ENCODE measurements at regions of chr2 and their contacts with region 1.

Region 1: GRCh38 chr2:29841386-29842004 is 79.9 kb downstream of the ALK start:
- DNase-seq: peak in 1 of 2 experiments; percentile 48
- H3K4me3 ChIP-seq: no peak overlapping the region
- H3K4me3 Mint-ChIP-seq: no peak overlapping the region
- H3K27ac Mint-ChIP-seq: no peak overlapping the region
- H3K4me1 ChIP-seq: no peaks in the 10 kb centered on the region
- H3K4me1 Mint-ChIP-seq: no peaks in the 10 kb centered on the region
- H3K27me3 ChIP-seq: no peaks in the 10 kb centered on the region
- H3K27me3 Mint-ChIP-seq: peaks cover 21% of the 10 kb centered on the region
- CTCF ChIP-seq: peak; percentile 91 to 92

Region 2: DNA sequence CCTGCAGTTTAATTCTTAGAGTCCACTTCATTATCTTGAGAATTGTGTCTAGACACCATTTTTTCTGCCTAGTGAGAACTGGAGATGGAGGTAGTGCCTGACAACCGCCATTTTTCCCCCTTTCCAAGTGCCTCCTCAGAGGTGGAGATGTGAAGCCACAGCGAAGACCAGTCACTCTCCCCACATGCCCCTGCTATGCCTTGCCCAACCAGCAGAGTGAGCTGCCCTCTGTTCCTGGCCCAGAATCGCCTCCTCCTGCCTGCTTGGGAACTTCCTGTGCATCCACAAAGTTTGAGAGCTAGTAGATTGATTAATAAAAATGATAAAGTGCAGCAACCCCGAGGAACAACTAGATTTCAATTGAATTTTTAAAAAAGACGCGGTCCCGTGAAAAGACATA is 603.0 kb before region 1 on chr2:
- CTCF ChIA-PET with region 1: no interaction called
- POLR2A ChIA-PET with region 1: no interaction called
- intact Hi-C with region 1: loop called (anchors 1 kb)
- DNase-seq: peak in 1 of 2 experiments; percentile 53
- H3K4me3 ChIP-seq: no peak overlapping the region
- H3K4me3 Mint-ChIP-seq: no peak overlapping the region
- H3K27ac Mint-ChIP-seq: no peak overlapping the region
- H3K4me1 ChIP-seq: no peaks in the 10 kb centered on the region
- H3K4me1 Mint-ChIP-seq: peaks cover 5% of the 10 kb centered on the region
- H3K27me3 ChIP-seq: no peaks in the 10 kb centered on the region; the same call in none of the 2 replicates
- H3K27me3 Mint-ChIP-seq: peaks cover 30% of the 10 kb centered on the region
- CTCF ChIP-seq: peak; percentile 43 to 77

Region 3: DNA sequence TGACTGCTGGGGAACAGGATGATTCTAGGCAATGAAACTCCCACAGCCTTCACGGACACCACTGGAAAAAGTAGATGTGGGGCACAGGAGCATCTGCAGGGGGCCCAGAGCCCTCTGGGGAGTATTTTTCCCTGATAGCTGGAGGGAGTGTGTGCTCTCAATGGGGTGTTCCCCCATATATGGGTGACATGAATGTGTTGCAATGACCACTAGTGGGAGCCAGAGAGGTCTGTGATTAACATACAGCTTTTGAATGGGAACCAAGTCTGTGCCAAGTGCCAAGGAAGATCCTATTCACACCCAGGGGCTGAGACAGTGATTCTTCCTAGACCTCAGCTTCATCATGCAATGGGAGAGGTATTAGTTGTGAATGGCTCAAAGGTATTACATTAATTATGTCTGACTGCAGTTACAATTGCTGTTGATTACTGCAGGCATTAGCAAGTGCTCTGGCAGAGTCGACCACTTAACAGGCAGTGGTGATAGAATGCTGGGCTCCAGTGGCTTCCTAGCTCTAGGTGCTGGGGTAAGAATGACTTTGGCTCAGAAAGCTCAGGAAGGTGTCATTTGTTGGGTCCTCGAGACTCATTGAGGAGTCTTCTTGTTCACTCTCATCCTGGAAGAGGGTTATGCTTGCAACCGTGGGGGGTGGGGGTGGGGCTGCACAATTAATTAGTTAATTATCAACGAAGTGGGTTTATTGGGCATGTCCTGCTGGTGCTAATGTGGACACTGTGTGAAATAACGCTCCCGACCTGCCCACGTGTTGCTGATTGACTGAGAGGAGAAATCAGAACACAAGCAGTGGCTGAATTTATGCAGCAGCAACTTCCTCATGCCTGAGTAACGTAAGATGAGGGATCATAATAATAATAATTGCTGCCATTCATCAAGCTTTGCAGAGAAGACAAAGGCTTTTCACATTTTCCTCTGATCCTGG is 532.1 kb before region 1 on chr2:
- CTCF ChIA-PET with region 1: no interaction called
- POLR2A ChIA-PET with region 1: no interaction called
- intact Hi-C with region 1: loop called (anchors 10 kb)
- DNase-seq: peak; percentile 55 to 62
- H3K4me3 ChIP-seq: no peak overlapping the region
- H3K4me3 Mint-ChIP-seq: no peak overlapping the region
- H3K27ac Mint-ChIP-seq: no peak overlapping the region
- H3K4me1 ChIP-seq: no peaks in the 10 kb centered on the region
- H3K4me1 Mint-ChIP-seq: no peaks in the 10 kb centered on the region
- H3K27me3 ChIP-seq: no peaks in the 10 kb centered on the region; the same call in 1 of the 2 replicates
- H3K27me3 Mint-ChIP-seq: peaks cover 20% of the 10 kb centered on the region
- CTCF ChIP-seq: peak; percentile 76 to 83

Region 4: GRCh38 chr2:29783694-29784093 is 57.8 kb before region 1 on chr2:
- CTCF ChIA-PET with region 1: no interaction called
- POLR2A ChIA-PET with region 1: no interaction called
- intact Hi-C with region 1: loop called (anchors 1 kb)
- DNase-seq: no peak
- H3K4me3 ChIP-seq: no peak overlapping the region
- H3K4me3 Mint-ChIP-seq: no peak overlapping the region
- H3K27ac Mint-ChIP-seq: no peak overlapping the region
- H3K4me1 ChIP-seq: no peaks in the 10 kb centered on the region
- H3K4me1 Mint-ChIP-seq: no peaks in the 10 kb centered on the region
- H3K27me3 ChIP-seq: no peaks in the 10 kb centered on the region
- H3K27me3 Mint-ChIP-seq: peaks cover 6% of the 10 kb centered on the region
- CTCF ChIP-seq: peak in 1 of 2 experiments; percentile 9

Measured in Caco-2 (cell line).